Naive thymus-derived CD4-positive, alpha-beta T cell (primary cell): ENCODE measurements at regions of chr10 and their contacts with region 1.

Region 1: DNA sequence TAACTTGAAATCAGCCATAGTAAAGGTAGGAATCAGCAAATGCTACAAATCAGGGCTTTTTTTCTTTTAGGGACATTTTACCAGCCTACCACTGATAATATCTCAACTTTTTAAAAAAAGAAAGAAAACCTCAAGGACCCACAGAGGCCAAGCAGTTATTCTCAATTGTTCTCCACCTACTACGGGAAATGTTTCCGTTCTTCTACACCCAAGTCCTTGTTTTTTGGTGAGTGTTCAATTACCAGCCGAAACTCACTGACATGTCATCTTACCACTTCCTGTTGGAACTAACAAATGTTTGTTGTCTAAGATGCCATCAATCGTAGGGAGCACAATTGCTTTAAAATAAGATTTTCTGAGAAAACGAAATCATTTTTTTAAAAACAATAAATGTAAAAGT is 50.2 kb upstream of the CDK1 start:
- DNase-seq: peak in 7 of 9 donors; percentile 51 to 85 (median 78)
- ATAC-seq: peak; percentile 73
- H3K4me3 ChIP-seq: peak overlapping the region; percentile 57
- H3K4me3 Mint-ChIP-seq: peak overlapping the region; percentile 74 to 94 (median 83)
- H3K27ac ChIP-seq: peak overlapping the region; percentile 89
- H3K27ac Mint-ChIP-seq: peak overlapping the region; percentile 84 to 98 (median 94)
- H3K4me1 ChIP-seq: peaks cover 28 to 64% of the 10 kb centered on the region in 2 donors
- H3K4me1 Mint-ChIP-seq: peaks cover 35 to 86% (median 77%) of the 10 kb centered on the region in 7 donors
- H3K27me3 ChIP-seq: no peaks in the 10 kb centered on the region
- H3K27me3 Mint-ChIP-seq: peaks cover 0 to 7% (median 0%) of the 10 kb centered on the region in 5 donors

Region 2: GRCh38 chr10:60717852-60718251 is 10.2 kb before region 1 on chr10:
- CTCF ChIA-PET with region 1: interaction called, 5 read pairs
- POLR2A ChIA-PET with region 1: interaction called, 6 read pairs
- intact Hi-C with region 1: loop called (anchors 1 kb)
- DNase-seq: no peak
- ATAC-seq: no peak
- H3K4me3 ChIP-seq: no peak overlapping the region
- H3K4me3 Mint-ChIP-seq: no peak overlapping the region
- H3K27ac ChIP-seq: no peak overlapping the region
- H3K27ac Mint-ChIP-seq: no peak overlapping the region
- H3K4me1 ChIP-seq: peaks cover 12 to 13% of the 10 kb centered on the region in 2 donors
- H3K4me1 Mint-ChIP-seq: peaks cover 26 to 90% (median 68%) of the 10 kb centered on the region in 7 donors
- H3K27me3 ChIP-seq: no peaks in the 10 kb centered on the region
- H3K27me3 Mint-ChIP-seq: no peaks in the 10 kb centered on the region

Region 3: GRCh38 chr10:61970182-61971002 is 1242.3 kb after region 1 on chr10:
- CTCF ChIA-PET with region 1: no interaction called
- POLR2A ChIA-PET with region 1: no interaction called
- intact Hi-C with region 1: no loop called
- DNase-seq: no peak
- ATAC-seq: no peak
- H3K4me3 ChIP-seq: no peak overlapping the region
- H3K4me3 Mint-ChIP-seq: peak overlapping the region in 1 of 10 donors; percentile 28
- H3K27ac ChIP-seq: no peak overlapping the region
- H3K27ac Mint-ChIP-seq: peak overlapping the region in 6 of 9 donors; percentile 13 to 65 (median 53)
- H3K4me1 ChIP-seq: peaks cover 0 to 14% of the 10 kb centered on the region in 2 donors
- H3K4me1 Mint-ChIP-seq: peaks cover 5 to 67% (median 42%) of the 10 kb centered on the region in 7 donors
- H3K27me3 ChIP-seq: no peaks in the 10 kb centered on the region
- H3K27me3 Mint-ChIP-seq: no peaks in the 10 kb centered on the region